SK-N-SH (cell line): ENCODE measurements at regions of chr7 and their contacts with region 1.

Region 1: GRCh38 chr7:133794479-133794878 is 332.7 kb upstream of the LRGUK start:
- DNase-seq: no peak
- H3K4me3 ChIP-seq: no peak overlapping the region
- H3K27ac ChIP-seq: peak overlapping the region in 1 of 2 experiments; percentile 100; a peak in 2 of 4 replicates
- H3K4me1 ChIP-seq: peaks cover 11 to 49% of the 10 kb centered on the region in 2 experiments; a peak in 3 of 4 replicates
- H3K27me3 ChIP-seq: no peaks in the 10 kb centered on the region
- CTCF ChIP-seq: no peak
- EP300 ChIP-seq: peak in 1 of 2 experiments; percentile 40; a peak in 1 of 4 replicates
- RAD21 ChIP-seq: no peak

Region 2: GRCh38 chr7:133770863-133771492 is 23.5 kb before region 1 on chr7:
- CTCF ChIA-PET with region 1: interaction called, 44 read pairs
- POLR2A ChIA-PET with region 1: interaction called, 10 read pairs
- DNase-seq: no peak
- H3K4me3 ChIP-seq: no peak overlapping the region
- H3K27ac ChIP-seq: peak overlapping the region; percentile 67 to 100
- H3K4me1 ChIP-seq: peaks cover 12 to 74% of the 10 kb centered on the region in 2 experiments
- H3K27me3 ChIP-seq: no peaks in the 10 kb centered on the region
- CTCF ChIP-seq: no peak
- EP300 ChIP-seq: no peak
- RAD21 ChIP-seq: no peak

Region 3: GRCh38 chr7:133820584-133820983 is 26.1 kb after region 1 on chr7:
- CTCF ChIA-PET with region 1: interaction called, 15 read pairs
- POLR2A ChIA-PET with region 1: no interaction called
- DNase-seq: peak; percentile 41
- H3K4me3 ChIP-seq: no peak overlapping the region
- H3K27ac ChIP-seq: peak overlapping the region in 1 of 2 experiments; percentile 93; a peak in 2 of 4 replicates
- H3K4me1 ChIP-seq: peaks cover 0 to 38% of the 10 kb centered on the region in 2 experiments; a peak in 3 of 4 replicates
- H3K27me3 ChIP-seq: no peaks in the 10 kb centered on the region
- CTCF ChIP-seq: no peak
- EP300 ChIP-seq: no peak; a peak in 1 of 4 replicates
- RAD21 ChIP-seq: peak; percentile 27; the same call in 1 of the 2 replicates

Region 4: DNA sequence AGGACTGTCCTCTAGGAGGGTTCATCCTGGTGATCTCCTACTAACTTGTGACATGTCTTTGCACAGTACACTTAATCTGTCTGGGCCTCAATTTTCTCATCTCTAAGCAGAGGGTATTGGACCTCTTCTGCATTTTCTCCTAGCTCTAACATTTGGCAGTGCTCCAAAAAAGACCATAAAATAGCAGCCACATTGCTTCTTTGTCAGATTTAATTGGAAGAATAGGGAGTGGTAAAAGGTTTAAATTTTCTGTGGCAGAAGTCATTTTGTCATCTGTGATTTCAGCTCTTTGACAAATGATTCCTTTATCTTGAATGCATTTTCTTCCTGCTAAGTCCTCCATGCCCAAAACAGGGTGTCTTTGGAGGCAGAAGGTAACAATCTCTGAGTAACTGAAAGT is 42.7 kb after region 1 on chr7:
- CTCF ChIA-PET with region 1: interaction called, 47 read pairs
- POLR2A ChIA-PET with region 1: interaction called, 26 read pairs
- DNase-seq: peak; percentile 57
- H3K4me3 ChIP-seq: no peak overlapping the region
- H3K27ac ChIP-seq: peak overlapping the region; percentile 12 to 100; a peak in 3 of 4 replicates
- H3K4me1 ChIP-seq: peaks cover 0 to 50% of the 10 kb centered on the region in 2 experiments; a peak in 2 of 4 replicates
- H3K27me3 ChIP-seq: no peaks in the 10 kb centered on the region
- CTCF ChIP-seq: no peak
- EP300 ChIP-seq: peak in 1 of 2 experiments; percentile 94; a peak in 2 of 4 replicates
- RAD21 ChIP-seq: peak; percentile 33; the same call in 1 of the 2 replicates

Region 5: DNA sequence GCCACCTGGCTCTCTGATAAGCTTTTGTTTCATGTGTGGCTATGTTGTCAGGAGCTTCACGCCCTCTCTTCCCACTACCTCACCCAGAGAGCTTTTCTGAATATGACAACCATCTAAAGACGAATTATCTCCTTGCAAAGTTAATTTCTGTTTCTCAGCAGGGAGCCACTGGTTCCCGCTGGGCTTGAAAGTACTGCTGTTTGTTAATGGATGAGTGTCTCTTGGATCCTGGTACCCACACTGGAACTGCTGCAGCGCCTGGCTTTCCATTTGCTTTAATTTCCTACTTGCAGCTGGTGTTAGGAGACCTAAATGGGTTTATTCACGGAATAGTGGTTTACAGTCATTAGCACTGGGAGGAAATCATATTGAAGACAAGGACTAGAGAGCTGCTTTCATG is 64.8 kb after region 1 on chr7:
- CTCF ChIA-PET with region 1: interaction called, 46 read pairs
- POLR2A ChIA-PET with region 1: interaction called, 4 read pairs
- DNase-seq: no peak
- H3K4me3 ChIP-seq: no peak overlapping the region
- H3K27ac ChIP-seq: peak overlapping the region in 1 of 2 experiments; percentile 98; a peak in 2 of 4 replicates
- H3K4me1 ChIP-seq: peaks cover 8 to 69% of the 10 kb centered on the region in 2 experiments
- H3K27me3 ChIP-seq: no peaks in the 10 kb centered on the region
- CTCF ChIP-seq: no peak
- EP300 ChIP-seq: 0 out of 4 replicates have a peak, but pooled peaks of 1 of the 2 experiments have one; percentile 6
- RAD21 ChIP-seq: no peak